SK-N-SH (cell line): ENCODE measurements at regions of chr1 and their contacts with region 1.

Region 1: GRCh38 chr1:17606826-17607440 is 67.4 kb downstream of the ARHGEF10L start:
- DNase-seq: peak; percentile 88
- H3K4me3 ChIP-seq: no peak overlapping the region; a peak in 1 of 4 replicates
- H3K27ac ChIP-seq: no peak overlapping the region
- H3K4me1 ChIP-seq: peaks cover 0 to 41% of the 10 kb centered on the region in 2 experiments; a peak in 1 of 4 replicates
- H3K27me3 ChIP-seq: no peaks in the 10 kb centered on the region
- CTCF ChIP-seq: peak; percentile 98
- EP300 ChIP-seq: no peak
- RAD21 ChIP-seq: peak; percentile 96

Region 2: DNA sequence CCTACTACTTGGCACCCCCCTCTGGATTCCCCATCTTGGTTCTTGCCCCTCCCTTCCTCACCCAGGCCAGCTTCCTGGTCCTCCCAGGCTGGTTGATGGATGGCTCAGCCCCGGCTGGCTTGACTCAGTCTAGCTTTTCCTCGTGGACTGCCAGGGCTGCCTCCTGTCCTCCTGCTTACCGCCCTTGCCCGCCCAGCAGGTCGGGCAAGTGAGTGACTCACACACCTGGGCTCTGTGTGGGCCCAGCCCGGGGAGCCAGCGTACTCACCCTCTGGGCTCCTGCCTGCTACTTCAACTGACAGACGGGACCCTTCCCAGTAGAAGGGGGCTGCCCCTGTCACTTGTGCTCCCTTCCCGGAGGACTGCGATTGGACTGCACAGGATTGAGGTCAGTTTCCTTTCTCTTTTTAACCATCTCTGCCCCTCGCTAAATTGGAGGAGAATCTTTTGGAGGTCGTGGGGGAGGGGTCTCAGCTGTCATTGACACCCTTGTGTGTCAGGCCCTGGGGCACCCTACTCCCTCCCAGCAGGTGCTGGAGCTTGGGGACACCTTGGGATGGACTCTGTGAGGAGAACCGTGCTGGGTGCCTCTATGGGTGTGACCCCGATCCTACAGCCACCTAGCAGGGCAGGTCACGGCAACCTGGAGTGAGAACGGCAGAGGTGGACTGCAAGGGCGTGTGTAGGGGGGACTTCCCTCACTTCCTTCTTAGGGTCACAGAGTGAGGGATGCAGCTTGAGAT is 86.7 kb before region 1 on chr1:
- CTCF ChIA-PET with region 1: interaction called, 22 read pairs
- POLR2A ChIA-PET with region 1: no interaction called
- DNase-seq: no peak
- H3K4me3 ChIP-seq: no peak overlapping the region
- H3K27ac ChIP-seq: no peak overlapping the region
- H3K4me1 ChIP-seq: peaks cover 0 to 3% of the 10 kb centered on the region in 2 experiments; a peak in 1 of 4 replicates
- H3K27me3 ChIP-seq: no peaks in the 10 kb centered on the region
- CTCF ChIP-seq: no peak
- EP300 ChIP-seq: no peak
- RAD21 ChIP-seq: no peak

Region 3: DNA sequence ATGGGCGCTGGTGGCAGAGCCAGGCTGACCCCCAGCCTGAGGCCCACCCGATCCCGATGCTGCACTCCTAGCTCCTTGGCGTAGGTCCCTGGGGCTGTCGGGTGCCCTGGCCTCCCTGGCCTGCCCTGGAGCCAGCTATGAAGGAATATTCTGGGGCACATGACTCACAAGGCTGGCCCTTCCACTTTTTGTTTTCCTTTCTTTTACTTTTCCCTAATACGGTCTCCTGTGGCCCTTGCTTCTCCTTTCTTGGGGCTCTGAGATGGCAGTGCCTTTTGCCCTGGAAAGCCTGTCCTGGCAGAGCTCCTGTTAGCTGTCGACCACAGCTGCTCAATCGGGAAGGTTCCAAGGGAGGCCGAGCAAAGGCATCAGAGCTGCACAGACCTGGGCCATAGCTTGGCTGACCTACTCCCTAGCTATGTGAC is 45.4 kb before region 1 on chr1:
- CTCF ChIA-PET with region 1: interaction called, 23 read pairs
- POLR2A ChIA-PET with region 1: no interaction called
- DNase-seq: no peak
- H3K4me3 ChIP-seq: no peak overlapping the region; a peak in 1 of 4 replicates
- H3K27ac ChIP-seq: peak overlapping the region in 1 of 2 experiments; percentile 71; a peak in 2 of 4 replicates
- H3K4me1 ChIP-seq: peaks cover 19 to 20% of the 10 kb centered on the region in 2 experiments; a peak in 3 of 4 replicates
- H3K27me3 ChIP-seq: no peaks in the 10 kb centered on the region
- CTCF ChIP-seq: no peak
- EP300 ChIP-seq: no peak
- RAD21 ChIP-seq: no peak

Region 4: DNA sequence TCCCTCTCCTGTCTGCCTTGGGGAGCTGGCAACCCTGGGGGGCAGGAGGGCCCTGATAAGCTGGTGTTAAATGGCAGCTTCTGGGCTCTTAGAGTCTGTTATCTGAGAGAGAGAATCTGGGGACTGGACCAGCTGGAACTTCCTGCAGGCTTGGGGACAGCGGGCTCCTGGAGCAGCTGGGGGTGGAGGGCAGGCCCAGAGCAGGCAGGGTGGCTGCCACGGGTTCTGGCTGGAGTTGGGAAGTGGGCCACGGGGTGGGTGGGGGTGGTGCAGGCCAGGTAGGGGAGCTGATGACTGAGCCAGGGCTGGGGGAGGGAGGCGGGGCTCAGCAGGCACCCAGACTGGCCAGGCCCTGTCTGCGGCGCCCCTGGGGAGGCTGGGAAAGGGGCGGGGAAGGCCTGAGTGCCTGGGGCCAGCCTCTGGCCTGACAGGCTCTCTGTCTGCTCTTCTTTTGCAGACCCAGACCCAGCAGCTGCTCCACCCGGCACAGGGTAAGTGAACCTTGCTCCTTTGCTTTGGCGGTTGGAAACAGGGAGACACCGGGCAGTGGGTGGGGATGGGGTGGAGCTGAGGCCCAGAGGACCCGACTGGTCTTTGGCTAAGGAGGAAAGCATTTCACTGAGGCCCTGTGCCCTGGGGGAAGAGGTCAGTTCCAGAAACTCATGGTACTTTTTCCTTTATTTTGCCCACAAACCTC is 18.8 kb before region 1 on chr1:
- CTCF ChIA-PET with region 1: interaction called, 44 read pairs
- POLR2A ChIA-PET with region 1: interaction called, 6 read pairs
- DNase-seq: peak; percentile 89
- H3K4me3 ChIP-seq: peak overlapping the region in 1 of 2 experiments; percentile 32; a peak in 2 of 4 replicates
- H3K27ac ChIP-seq: peak overlapping the region; percentile 82 to 90
- H3K4me1 ChIP-seq: peaks cover 18 to 66% of the 10 kb centered on the region in 2 experiments
- H3K27me3 ChIP-seq: no peaks in the 10 kb centered on the region
- CTCF ChIP-seq: no peak
- EP300 ChIP-seq: peak in 1 of 2 experiments; percentile 69; a peak in 2 of 4 replicates
- RAD21 ChIP-seq: no peak

Region 5: DNA sequence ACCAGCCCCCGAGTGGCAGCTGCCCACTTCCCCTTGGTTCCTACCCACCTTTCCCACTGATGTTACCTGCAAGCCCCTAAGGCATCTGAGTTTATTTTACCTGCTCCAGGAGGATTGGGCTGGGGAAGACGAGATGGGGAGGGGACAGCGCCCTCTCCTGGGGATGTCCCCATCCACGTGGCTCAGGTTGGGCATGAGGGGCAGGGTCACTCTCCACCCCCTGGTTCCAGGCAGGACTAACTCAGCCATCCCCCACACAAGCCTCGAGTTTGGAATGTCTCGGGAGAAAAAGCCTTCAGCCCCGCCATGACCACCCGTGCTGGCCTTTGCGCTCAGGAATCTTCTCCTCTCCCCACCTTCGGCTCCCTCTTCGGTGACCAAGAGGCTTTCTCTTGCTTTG is 22.5 kb after region 1 on chr1:
- CTCF ChIA-PET with region 1: interaction called, 10 read pairs
- POLR2A ChIA-PET with region 1: no interaction called
- DNase-seq: peak; percentile 64
- H3K4me3 ChIP-seq: no peak overlapping the region
- H3K27ac ChIP-seq: no peak overlapping the region
- H3K4me1 ChIP-seq: peaks cover 4 to 20% of the 10 kb centered on the region in 2 experiments; a peak in 3 of 4 replicates
- H3K27me3 ChIP-seq: no peaks in the 10 kb centered on the region
- CTCF ChIP-seq: peak; percentile 52
- EP300 ChIP-seq: no peak
- RAD21 ChIP-seq: peak; percentile 24; the same call in 1 of the 2 replicates